SK-N-SH (cell line): ENCODE measurements at regions of chrX and their contacts with region 1.

Region 1: DNA sequence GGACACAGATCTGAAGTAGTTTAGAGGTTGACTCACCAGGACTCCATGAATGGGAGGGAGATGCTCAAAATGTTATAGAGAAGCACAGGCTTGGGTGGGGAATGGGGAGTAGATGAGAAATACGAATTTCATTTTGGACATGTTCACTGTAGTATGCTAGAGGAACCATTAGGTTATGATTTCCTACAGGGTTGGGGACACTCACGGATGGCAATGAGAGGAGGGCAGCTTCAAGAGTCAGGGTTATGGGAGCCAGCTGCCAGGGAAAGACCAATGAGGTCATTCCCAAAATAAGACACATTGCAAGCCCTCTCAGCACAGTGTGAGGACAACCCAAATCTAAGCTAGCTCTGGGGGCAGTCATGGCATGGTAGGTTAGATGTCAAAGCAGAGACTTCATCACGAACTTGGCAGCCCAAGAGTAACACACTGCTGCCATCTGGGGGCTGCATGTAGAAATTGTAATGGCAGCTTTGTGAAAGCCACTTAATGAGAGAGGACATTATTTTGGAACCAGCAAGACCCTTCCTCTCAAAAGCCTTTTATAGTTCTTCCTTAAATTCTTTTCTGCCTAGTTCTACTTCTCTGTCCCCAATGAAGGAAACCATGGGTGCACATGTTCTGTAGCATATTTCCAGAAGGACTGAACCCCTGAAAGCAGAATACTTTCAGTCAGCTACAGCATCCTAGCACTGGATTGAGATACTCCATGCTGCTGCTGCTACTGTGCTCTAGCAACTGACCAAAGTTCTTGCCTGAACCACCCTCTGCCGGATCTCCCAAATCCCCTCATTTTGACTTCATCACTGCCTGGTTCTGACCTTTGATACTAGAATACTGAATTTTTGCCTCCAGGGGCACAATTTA is 16.2 kb upstream of the ZCCHC12 start:
- DNase-seq: peak; percentile 45
- H3K4me3 ChIP-seq: no peak overlapping the region
- H3K27ac ChIP-seq: no peak overlapping the region
- H3K4me1 ChIP-seq: no peaks in the 10 kb centered on the region
- H3K27me3 ChIP-seq: no peaks in the 10 kb centered on the region
- CTCF ChIP-seq: peak; percentile 73
- EP300 ChIP-seq: no peak
- RAD21 ChIP-seq: peak; percentile 83

Region 2: GRCh38 chrX:118627084-118627758 is 180.2 kb before region 1 on chrX:
- CTCF ChIA-PET with region 1: interaction called, 14 read pairs
- POLR2A ChIA-PET with region 1: no interaction called
- DNase-seq: peak; percentile 18
- H3K4me3 ChIP-seq: no peak overlapping the region
- H3K27ac ChIP-seq: no peak overlapping the region
- H3K4me1 ChIP-seq: no peaks in the 10 kb centered on the region
- H3K27me3 ChIP-seq: no peaks in the 10 kb centered on the region
- CTCF ChIP-seq: peak; percentile 49
- EP300 ChIP-seq: no peak
- RAD21 ChIP-seq: peak; percentile 54

Region 3: DNA sequence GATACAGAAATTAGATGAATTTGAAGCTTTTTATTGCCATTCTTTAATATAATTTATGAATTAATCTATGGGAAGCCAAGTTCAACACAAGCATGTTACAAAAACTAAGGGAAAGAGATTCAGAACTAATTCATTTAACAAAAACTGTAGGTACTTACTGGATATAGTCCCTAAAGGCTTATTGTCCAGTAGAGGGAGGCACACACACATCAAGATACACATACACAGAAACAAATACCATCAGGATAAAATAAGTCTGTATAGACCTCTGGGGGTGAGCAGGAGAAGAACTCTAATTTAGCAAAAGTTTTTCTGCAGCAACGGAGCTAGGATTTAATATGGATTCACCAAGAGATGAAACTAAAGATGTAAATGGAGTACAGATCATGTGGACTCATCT is 163.0 kb before region 1 on chrX:
- CTCF ChIA-PET with region 1: interaction called, 12 read pairs
- POLR2A ChIA-PET with region 1: no interaction called
- DNase-seq: peak; percentile 9
- H3K4me3 ChIP-seq: no peak overlapping the region
- H3K27ac ChIP-seq: no peak overlapping the region
- H3K4me1 ChIP-seq: no peaks in the 10 kb centered on the region
- H3K27me3 ChIP-seq: no peaks in the 10 kb centered on the region
- CTCF ChIP-seq: peak; percentile 56
- EP300 ChIP-seq: no peak
- RAD21 ChIP-seq: peak; percentile 52

Region 4: DNA sequence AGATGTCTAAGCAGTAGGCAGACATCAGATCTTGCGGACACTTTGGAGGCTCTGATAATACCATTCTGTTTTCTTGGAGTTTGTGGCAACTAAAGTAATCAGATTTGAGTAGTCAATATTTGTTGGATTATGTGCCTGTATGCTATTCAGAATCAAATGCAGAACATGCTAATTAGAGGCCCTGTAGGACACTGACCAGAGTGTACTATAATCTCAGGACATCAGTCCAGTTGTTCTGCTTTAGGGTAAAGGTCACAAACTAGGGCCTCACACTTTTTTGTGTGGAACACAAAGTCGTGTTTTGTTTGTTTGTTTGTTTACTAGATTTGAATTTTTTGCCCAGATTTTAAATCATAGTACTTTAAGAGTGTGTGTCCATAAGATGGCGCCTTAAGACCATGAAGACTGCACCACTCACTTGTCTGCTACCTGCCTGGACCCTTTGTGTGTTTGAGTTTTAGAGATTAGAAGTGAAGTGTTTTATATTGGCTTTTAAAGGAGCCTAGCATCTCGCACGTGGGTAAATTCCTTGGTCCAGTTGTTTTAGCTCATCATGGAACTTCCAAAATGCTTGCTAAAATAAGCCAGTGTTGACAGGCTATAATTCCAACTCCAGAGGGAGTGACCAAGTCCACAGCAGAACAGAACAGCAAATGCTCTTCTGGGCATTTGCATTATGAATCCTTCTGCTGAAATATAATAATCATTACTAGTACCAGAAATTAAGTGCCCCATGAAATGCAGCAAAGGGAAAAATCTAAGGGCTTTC is 45.3 kb before region 1 on chrX:
- CTCF ChIA-PET with region 1: interaction called, 10 read pairs
- POLR2A ChIA-PET with region 1: no interaction called
- DNase-seq: peak; percentile 16
- H3K4me3 ChIP-seq: no peak overlapping the region
- H3K27ac ChIP-seq: no peak overlapping the region
- H3K4me1 ChIP-seq: no peaks in the 10 kb centered on the region
- H3K27me3 ChIP-seq: no peaks in the 10 kb centered on the region
- CTCF ChIP-seq: peak; percentile 29
- EP300 ChIP-seq: no peak
- RAD21 ChIP-seq: peak; percentile 56